ENCODE measurements at regions of chr13 and their contacts with region 1.

Region 1: DNA sequence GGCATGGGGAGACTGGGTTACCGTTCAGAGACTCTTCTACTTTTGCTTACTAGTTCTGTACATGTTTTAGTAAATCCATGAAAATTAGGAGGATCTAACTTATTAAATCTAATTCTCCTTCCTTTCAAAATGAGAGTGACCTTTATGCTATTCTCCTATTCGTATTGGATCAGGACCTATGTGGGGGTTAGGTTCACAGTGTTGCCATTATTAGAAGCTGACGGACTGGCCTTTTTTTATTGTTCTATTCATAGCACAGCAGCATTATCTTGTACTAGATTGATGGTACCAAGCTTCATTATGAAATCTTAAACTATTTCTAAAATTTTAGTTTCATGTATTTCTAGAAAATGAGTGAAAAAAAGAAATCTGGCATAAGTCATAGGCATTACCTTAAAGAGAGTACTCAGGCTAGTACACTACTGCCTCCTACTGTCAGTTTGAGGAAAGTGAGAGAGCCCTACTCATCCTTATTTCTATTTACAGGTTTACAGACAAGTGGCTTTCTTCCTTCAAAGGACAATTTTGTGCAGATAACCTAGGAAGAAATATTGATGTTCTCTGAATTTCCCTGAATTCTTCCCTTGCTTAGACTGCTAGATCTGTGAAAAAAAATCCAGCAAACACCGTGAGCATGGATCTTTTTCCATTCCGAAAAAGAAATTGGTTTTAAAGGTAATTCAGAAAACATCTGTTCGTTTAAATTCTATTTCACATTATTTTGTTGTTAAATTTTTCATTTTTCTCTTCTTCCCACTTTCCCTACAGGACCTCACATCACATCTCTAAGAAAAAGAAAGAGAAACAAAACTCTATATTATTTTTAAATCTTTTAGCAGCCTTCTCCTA is 485.5 kb downstream of the DIAPH3 start:
- DNase-seq: peak in 2 of 9 experiments; percentile 39 to 53
- ATAC-seq: peak; percentile 66
- H3K4me3 ChIP-seq: no peak overlapping the region
- H3K4me3 Mint-ChIP-seq: no peak overlapping the region
- H3K27ac ChIP-seq: no peak overlapping the region
- H3K27ac Mint-ChIP-seq: no peak overlapping the region
- H3K4me1 ChIP-seq: no peaks in the 10 kb centered on the region
- H3K4me1 Mint-ChIP-seq: peaks cover 5% of the 10 kb centered on the region
- H3K27me3 ChIP-seq: no peaks in the 10 kb centered on the region
- H3K27me3 Mint-ChIP-seq: no peaks in the 10 kb centered on the region
- CTCF ChIP-seq: peak; percentile 57

Region 2: DNA sequence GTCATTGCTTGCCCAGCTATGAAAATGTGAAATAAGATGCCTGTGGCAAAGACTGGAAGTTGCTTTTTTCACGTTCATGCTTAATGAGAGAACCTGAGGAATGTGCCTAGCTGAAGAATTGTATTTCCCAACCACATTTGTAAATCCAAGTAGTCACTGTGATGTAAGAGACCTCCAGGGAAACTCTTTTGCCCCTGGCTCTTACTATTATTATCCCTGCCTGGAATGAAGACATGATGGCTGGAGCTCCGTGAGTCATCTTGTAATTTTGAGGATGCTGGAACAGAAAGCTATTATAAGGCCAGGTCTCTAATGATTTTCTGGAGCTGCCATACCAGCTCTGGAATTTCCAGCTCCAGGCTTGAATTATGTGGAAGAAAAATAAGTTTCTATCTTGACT is 408.7 kb before region 1 on chr13:
- CTCF ChIA-PET with region 1: no interaction called
- POLR2A ChIA-PET with region 1: no interaction called
- intact Hi-C with region 1: no loop called
- DNase-seq: no peak
- ATAC-seq: no peak
- H3K4me3 ChIP-seq: no peak overlapping the region
- H3K4me3 Mint-ChIP-seq: no peak overlapping the region
- H3K27ac ChIP-seq: no peak overlapping the region
- H3K27ac Mint-ChIP-seq: no peak overlapping the region
- H3K4me1 ChIP-seq: no peaks in the 10 kb centered on the region
- H3K4me1 Mint-ChIP-seq: no peaks in the 10 kb centered on the region
- H3K27me3 ChIP-seq: no peaks in the 10 kb centered on the region
- H3K27me3 Mint-ChIP-seq: no peaks in the 10 kb centered on the region
- CTCF ChIP-seq: no peak

Region 3: DNA sequence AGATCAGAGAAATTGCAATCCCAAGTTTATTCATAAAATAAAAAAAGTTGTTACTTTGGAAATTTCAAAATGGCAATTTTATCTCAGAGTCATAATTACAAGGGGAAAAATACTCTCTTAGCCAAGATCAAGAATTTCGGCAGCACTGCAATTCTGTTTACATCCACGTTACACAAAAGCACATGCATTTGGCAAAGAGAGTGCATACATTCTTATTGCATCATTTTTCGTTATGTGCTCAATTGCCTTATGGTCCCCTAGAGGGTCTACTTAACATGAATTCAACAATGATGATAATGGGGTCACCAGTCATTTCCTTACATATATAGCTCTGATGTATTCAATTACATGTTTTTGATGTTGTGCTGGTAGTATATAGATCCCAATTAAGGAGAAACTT is 12.5 kb before region 1 on chr13:
- CTCF ChIA-PET with region 1: interaction called, 10 read pairs
- POLR2A ChIA-PET with region 1: no interaction called
- intact Hi-C with region 1: no loop called
- DNase-seq: no peak
- ATAC-seq: no peak
- H3K4me3 ChIP-seq: no peak overlapping the region
- H3K4me3 Mint-ChIP-seq: no peak overlapping the region
- H3K27ac ChIP-seq: no peak overlapping the region
- H3K27ac Mint-ChIP-seq: no peak overlapping the region
- H3K4me1 ChIP-seq: no peaks in the 10 kb centered on the region
- H3K4me1 Mint-ChIP-seq: no peaks in the 10 kb centered on the region
- H3K27me3 ChIP-seq: no peaks in the 10 kb centered on the region
- H3K27me3 Mint-ChIP-seq: no peaks in the 10 kb centered on the region
- CTCF ChIP-seq: no peak

Region 4: GRCh38 chr13:60335531-60335930 is 657.3 kb after region 1 on chr13:
- CTCF ChIA-PET with region 1: no interaction called
- POLR2A ChIA-PET with region 1: no interaction called
- intact Hi-C with region 1: loop called (anchors 1 to 2 kb)
- DNase-seq: peak in 1 of 9 experiments; percentile 5
- ATAC-seq: no peak
- H3K4me3 ChIP-seq: no peak overlapping the region
- H3K4me3 Mint-ChIP-seq: no peak overlapping the region
- H3K27ac ChIP-seq: no peak overlapping the region
- H3K27ac Mint-ChIP-seq: no peak overlapping the region
- H3K4me1 ChIP-seq: no peaks in the 10 kb centered on the region
- H3K4me1 Mint-ChIP-seq: no peaks in the 10 kb centered on the region
- H3K27me3 ChIP-seq: no peaks in the 10 kb centered on the region
- H3K27me3 Mint-ChIP-seq: peaks cover 3% of the 10 kb centered on the region
- CTCF ChIP-seq: peak; percentile 68